ENCODE measurements at regions of chr6 and their contacts with region 1.

Region 1: GRCh38 chr6:125153391-125154117 is at the start of gene TPD52L1:
- DNase-seq: peak; percentile 72 to 77
- ATAC-seq: peak; percentile 95 to 97
- H3K4me3 ChIP-seq: peak within 1 kb of the TSS; percentile 82
- H3K27ac ChIP-seq: peak within 1 kb of the TSS; percentile 85 to 91
- H3K4me1 ChIP-seq: peaks cover 17% of the 10 kb centered on the region; the same call in 1 of the 3 replicates
- CTCF ChIP-seq: peak; percentile 75
- EP300 ChIP-seq: no peak
- POLR2A ChIP-seq: peak; percentile 19; the same call in 1 of the 2 replicates
- RAD21 ChIP-seq: peak; percentile 63 to 78
- polyA plus RNA-seq, gene TPD52L1: 119 and 144 TPM in 2 replicates

Region 2: GRCh38 chr6:124738482-124738881 is 415.1 kb before region 1 on chr6:
- CTCF ChIA-PET with region 1: no interaction called
- POLR2A ChIA-PET with region 1: no interaction called
- DNase-seq: no peak
- ATAC-seq: no peak
- H3K4me3 ChIP-seq: no peak overlapping the region
- H3K27ac ChIP-seq: no peak overlapping the region
- H3K4me1 ChIP-seq: no peaks in the 10 kb centered on the region
- CTCF ChIP-seq: no peak
- EP300 ChIP-seq: no peak
- POLR2A ChIP-seq: no peak
- RAD21 ChIP-seq: no peak

Region 3: DNA sequence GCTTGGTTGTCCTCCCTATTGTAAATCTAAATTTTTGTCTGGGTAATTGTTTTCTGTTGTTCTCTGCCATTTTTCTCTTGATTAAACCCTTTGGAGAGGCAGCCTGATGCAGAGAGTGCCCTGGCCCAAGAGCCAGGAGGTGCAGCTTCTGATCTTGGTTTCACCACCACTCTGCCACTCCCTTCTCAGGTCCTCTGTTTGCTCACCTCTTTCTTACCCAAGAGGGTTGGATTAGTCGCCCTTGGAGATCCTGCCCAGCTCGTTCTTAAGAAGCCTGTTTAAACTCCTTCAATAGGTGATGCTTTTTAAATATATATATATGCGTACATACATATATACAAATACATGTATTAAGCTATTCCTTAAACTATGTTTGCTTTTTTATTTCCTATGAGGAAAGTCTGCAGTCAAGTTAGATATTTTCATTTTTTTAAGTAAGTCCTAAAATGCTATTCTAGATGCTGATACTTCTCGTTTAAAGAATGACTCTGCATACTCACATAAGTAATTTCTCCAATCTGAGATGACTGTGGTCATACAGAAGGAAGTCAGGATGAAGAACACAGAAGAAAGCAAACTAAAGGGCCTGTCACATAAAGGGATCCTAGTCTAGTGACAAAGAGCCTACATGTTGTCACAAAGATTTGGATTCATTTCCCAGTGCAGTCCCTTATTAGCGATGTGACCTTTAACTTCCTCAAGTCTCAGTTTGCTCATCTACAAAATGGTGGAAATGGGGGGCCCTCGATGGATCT is 20.0 kb after region 1 on chr6:
- CTCF ChIA-PET with region 1: interaction called, 19 read pairs
- POLR2A ChIA-PET with region 1: no interaction called
- DNase-seq: no peak
- ATAC-seq: no peak
- H3K4me3 ChIP-seq: no peak overlapping the region
- H3K27ac ChIP-seq: peak overlapping the region in 1 of 2 experiments; percentile 6; a peak in 1 of 6 replicates
- H3K4me1 ChIP-seq: peaks cover 42% of the 10 kb centered on the region
- CTCF ChIP-seq: no peak
- EP300 ChIP-seq: no peak
- POLR2A ChIP-seq: no peak
- RAD21 ChIP-seq: no peak

Region 4: DNA sequence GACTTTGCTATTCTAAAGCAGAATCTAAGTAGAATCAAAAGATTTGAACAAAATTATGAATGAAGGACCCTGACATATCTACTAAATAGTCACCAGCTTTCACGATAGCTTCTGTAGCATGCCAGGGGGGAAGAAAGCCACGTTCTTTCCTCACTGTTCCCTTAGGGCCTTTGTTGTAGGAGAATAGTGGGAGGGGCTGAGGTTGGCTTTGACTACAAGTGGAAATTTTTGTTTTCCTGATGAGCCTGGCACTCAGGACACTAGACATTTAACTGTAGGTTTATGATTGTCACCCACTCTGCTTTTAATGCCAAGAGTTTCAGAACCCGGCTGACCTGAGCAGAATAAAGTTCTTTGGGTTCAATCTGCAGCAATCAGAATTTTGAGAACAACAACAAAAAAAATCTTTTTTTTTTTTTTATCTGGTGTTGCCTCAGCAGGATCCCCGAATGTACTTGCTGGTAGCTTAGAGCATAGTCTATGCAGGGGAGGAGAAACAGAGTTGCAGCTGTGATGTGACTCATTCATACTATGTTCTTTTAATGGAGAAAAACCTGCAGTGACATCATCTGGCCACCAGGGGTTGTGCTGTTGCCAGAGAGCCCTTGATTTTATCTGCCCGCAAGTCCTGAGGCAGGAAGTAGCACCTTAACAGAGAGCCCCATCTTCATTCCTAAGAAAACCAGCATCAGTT is 38.5 kb after region 1 on chr6:
- CTCF ChIA-PET with region 1: interaction called, 12 read pairs
- POLR2A ChIA-PET with region 1: no interaction called
- DNase-seq: peak; percentile 47 to 81
- ATAC-seq: peak; percentile 88 to 92
- H3K4me3 ChIP-seq: no peak overlapping the region
- H3K27ac ChIP-seq: peak overlapping the region; percentile 28 to 81; a peak in 5 of 6 replicates
- H3K4me1 ChIP-seq: peaks cover 84% of the 10 kb centered on the region
- CTCF ChIP-seq: peak; percentile 47
- EP300 ChIP-seq: no peak
- POLR2A ChIP-seq: no peak
- RAD21 ChIP-seq: peak; percentile 55 to 65; a peak in 4 of 5 replicates

Region 5: GRCh38 chr6:125301435-125302391 is 148.2 kb after region 1 on chr6 and contains the start of gene HDDC2:
- CTCF ChIA-PET with region 1: interaction called, 11 read pairs
- POLR2A ChIA-PET with region 1: interaction called, 10 read pairs
- DNase-seq: peak; percentile 28 to 60
- ATAC-seq: peak; percentile 92 to 93
- H3K4me3 ChIP-seq: peak within 1 kb of the TSS; percentile 66
- H3K27ac ChIP-seq: peak within 1 kb of the TSS; percentile 87 to 99
- H3K4me1 ChIP-seq: peaks cover 13% of the 10 kb centered on the region
- CTCF ChIP-seq: no peak
- EP300 ChIP-seq: no peak
- POLR2A ChIP-seq: peak; percentile 77
- RAD21 ChIP-seq: no peak
- polyA plus RNA-seq, gene HDDC2: 194 and 216 TPM in 2 replicates

Measured in A549 (cell line).